ENCODE measurements at regions of chr17 and their contacts with region 1.

Region 1: DNA sequence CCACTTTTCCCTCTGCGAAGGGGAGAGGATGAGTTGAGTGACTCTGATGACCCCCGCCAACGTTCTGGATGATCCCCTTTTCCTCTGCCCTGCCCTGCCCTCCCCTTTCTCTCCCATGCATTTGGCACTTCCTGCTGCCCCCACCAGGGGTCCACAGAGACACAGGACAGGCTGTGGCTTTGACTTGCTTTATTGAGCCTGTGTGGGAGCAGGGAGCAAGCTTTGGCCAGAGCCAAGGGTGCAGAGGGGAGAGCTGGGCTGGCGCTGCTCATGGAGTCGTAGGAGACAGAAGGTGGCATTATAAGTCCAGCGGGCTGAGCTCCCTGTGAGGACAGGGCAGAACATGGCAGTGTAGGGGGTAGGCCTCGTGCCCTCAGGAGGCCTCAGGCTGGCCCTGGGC is 1.6 kb downstream of the PPY start:
- DNase-seq: peak; percentile 78 to 83
- H3K4me3 ChIP-seq: no peak overlapping the region
- H3K4me3 Mint-ChIP-seq: no peak overlapping the region
- H3K27ac Mint-ChIP-seq: no peak overlapping the region
- H3K4me1 ChIP-seq: peaks cover 15% of the 10 kb centered on the region
- H3K4me1 Mint-ChIP-seq: peaks cover 17% of the 10 kb centered on the region
- H3K27me3 ChIP-seq: no peaks in the 10 kb centered on the region
- H3K27me3 Mint-ChIP-seq: peaks cover 6% of the 10 kb centered on the region
- CTCF ChIP-seq: peak; percentile 87 to 88

Region 2: GRCh38 chr17:43676471-43676870 is 264.2 kb before region 1 on chr17:
- CTCF ChIA-PET with region 1: no interaction called
- POLR2A ChIA-PET with region 1: no interaction called
- intact Hi-C with region 1: no loop called
- DNase-seq: no peak
- H3K4me3 ChIP-seq: no peak overlapping the region
- H3K4me3 Mint-ChIP-seq: no peak overlapping the region
- H3K27ac Mint-ChIP-seq: peak overlapping the region; percentile 69
- H3K4me1 ChIP-seq: peaks cover 47% of the 10 kb centered on the region
- H3K4me1 Mint-ChIP-seq: peaks cover 52% of the 10 kb centered on the region
- H3K27me3 ChIP-seq: no peaks in the 10 kb centered on the region
- H3K27me3 Mint-ChIP-seq: no peaks in the 10 kb centered on the region
- CTCF ChIP-seq: no peak

Region 3: DNA sequence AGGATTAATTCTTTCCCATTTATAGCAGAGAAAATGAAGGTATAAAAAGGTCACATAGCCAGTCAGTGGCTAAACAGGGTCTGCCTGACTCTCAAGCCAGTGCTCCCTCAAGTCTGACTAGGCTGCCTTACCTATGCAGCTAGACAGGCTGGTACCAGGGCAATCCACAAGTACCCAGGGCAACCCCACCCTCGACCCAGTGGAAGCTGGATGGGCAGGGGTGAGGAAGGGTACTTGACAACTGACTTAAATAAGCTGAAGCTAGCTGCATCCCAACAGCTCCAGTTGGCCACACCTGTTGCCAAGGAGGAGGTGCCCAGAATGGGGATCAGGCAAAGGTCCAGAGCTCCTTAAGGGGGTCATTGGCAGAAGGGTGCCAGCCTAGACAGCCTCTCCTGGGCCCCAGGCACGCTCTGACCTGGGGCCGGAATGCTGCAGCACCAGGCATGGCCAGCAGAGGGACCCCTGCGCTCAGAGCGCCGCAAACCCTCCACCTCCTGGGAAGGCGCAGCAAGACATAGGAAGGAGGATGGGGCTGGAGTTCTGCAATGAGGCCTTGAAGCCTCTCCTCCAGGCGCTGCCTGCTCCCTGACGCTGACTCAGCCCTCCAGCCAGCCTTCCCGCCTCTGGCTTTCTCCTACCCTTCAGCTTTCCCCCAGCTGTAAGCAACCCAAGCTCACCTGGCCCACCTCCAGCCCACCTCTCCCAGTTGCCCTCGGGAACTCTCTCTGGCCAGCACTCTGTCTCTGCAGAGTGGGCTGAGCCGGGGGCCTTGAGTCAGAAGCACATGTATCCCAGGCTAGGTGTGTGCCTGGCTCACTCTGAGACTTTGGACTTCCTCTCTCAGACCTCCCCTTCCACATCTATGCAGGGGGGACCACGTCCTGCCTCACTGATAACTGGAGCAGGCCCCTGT is 62.1 kb before region 1 on chr17:
- CTCF ChIA-PET with region 1: interaction called, 11 read pairs
- POLR2A ChIA-PET with region 1: no interaction called
- intact Hi-C with region 1: loop called (anchors 5 kb)
- DNase-seq: peak; percentile 81 to 89
- H3K4me3 ChIP-seq: no peak overlapping the region
- H3K4me3 Mint-ChIP-seq: no peak overlapping the region
- H3K27ac Mint-ChIP-seq: peak overlapping the region; percentile 45
- H3K4me1 ChIP-seq: peaks cover 10% of the 10 kb centered on the region
- H3K4me1 Mint-ChIP-seq: peaks cover 8% of the 10 kb centered on the region
- H3K27me3 ChIP-seq: no peaks in the 10 kb centered on the region
- H3K27me3 Mint-ChIP-seq: no peaks in the 10 kb centered on the region
- CTCF ChIP-seq: peak; percentile 98 to 99

Region 4: DNA sequence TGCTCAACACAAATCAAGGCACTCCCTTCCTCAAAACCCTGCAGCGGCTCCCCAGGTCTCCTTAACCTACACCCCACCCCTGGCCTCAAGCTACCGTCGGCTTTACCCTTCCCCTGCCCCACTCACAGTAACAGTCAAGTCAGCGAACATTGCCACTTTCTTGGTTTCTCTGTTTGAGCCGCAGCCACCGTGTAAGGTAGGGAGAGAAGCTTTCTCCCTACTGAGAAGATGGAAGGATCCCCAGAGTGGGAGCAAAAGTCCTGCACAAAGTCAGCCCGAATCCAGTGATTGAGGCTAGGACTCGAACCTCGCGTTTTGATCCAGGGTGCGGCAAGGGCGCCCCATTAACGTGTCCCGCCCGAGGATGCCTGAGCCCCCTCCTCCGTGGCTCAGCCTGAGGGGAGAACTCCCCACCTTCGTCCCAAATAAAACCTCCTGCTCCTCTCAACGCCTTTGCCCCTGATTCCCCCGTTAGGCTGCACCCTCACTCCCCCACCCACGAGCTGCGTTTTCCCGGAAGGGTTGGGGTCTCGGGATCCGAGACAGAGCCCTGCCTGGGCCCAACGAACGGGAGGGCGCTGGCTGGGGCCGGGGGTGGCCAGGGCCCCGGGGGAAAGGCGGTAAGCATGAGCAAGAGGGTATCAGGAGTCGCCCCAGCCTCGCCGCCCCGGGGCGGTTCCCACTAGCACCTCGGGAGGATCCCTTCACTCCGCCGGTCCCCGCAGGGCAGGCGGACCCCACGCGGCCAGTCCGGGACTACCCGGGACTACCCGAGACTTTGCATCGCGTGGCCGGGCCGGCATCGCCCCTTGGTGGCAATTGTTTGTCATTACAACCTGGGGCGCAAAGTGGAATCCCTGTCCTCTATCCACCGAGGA is 53.9 kb after region 1 on chr17:
- CTCF ChIA-PET with region 1: interaction called, 29 read pairs
- POLR2A ChIA-PET with region 1: interaction called, 3 read pairs
- intact Hi-C with region 1: loop called (anchors 1 kb)
- DNase-seq: peak; percentile 73 to 85
- H3K4me3 ChIP-seq: peak overlapping the region; percentile 17; the same call in 1 of the 2 replicates
- H3K4me3 Mint-ChIP-seq: peak overlapping the region; percentile 61
- H3K27ac Mint-ChIP-seq: no peak overlapping the region
- H3K4me1 ChIP-seq: peaks cover 11% of the 10 kb centered on the region
- H3K4me1 Mint-ChIP-seq: no peaks in the 10 kb centered on the region
- H3K27me3 ChIP-seq: no peaks in the 10 kb centered on the region
- H3K27me3 Mint-ChIP-seq: peaks cover 3% of the 10 kb centered on the region
- CTCF ChIP-seq: peak; percentile 84 to 98

Region 5: DNA sequence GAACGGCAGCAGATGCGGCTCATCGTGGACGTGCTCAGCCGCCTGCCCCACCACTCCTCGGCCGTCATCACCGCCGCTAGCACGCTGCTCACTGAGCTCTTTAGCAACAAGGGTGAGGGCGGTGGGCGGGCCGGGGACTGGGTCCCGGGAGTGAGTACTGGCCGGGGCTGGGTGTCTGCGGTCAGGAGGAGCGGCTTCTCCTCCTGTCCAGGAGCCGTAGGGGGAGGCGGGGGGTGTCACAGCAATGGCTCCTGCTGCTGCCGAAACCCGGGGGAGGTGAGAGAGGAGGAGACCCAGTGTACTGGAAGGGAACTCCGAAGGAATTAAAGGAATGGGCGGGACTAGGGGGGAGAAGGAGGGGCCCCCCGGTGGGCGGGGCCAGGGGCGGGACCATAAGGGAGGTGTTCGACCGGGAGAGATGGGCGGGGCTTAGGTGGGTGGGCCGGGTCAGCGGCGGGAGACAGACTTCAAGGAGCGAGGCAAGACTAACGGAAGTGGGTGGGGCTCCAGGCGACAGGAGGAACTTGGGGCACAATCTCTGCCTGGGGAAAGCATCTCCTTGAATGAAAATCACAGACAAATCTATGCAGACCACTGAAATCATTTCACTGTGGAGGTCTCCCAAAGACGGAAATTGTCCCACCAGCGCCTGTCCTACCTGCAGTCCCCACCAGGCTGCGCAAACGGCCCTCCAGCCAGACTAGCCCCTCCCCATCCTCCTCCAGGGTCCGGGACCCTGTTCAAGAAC is 66.1 kb after region 1 on chr17:
- CTCF ChIA-PET with region 1: interaction called, 15 read pairs
- POLR2A ChIA-PET with region 1: interaction called, 3 read pairs
- intact Hi-C with region 1: no loop called
- DNase-seq: peak; percentile 95 to 99
- H3K4me3 ChIP-seq: peak overlapping the region; percentile 50
- H3K4me3 Mint-ChIP-seq: peak overlapping the region; percentile 69
- H3K27ac Mint-ChIP-seq: peak overlapping the region; percentile 5
- H3K4me1 ChIP-seq: peaks cover 18% of the 10 kb centered on the region
- H3K4me1 Mint-ChIP-seq: no peaks in the 10 kb centered on the region
- H3K27me3 ChIP-seq: peaks cover 3% of the 10 kb centered on the region
- H3K27me3 Mint-ChIP-seq: peaks cover 4% of the 10 kb centered on the region
- CTCF ChIP-seq: peak; percentile 33 to 53

Region 6: GRCh38 chr17:44044067-44044466 is 103.4 kb after region 1 on chr17:
- CTCF ChIA-PET with region 1: interaction called, 18 read pairs
- POLR2A ChIA-PET with region 1: no interaction called
- intact Hi-C with region 1: loop called (anchors 1 kb)
- DNase-seq: no peak
- H3K4me3 ChIP-seq: no peak overlapping the region
- H3K4me3 Mint-ChIP-seq: no peak overlapping the region
- H3K27ac Mint-ChIP-seq: no peak overlapping the region
- H3K4me1 ChIP-seq: no peaks in the 10 kb centered on the region
- H3K4me1 Mint-ChIP-seq: peaks cover 6% of the 10 kb centered on the region
- H3K27me3 ChIP-seq: no peaks in the 10 kb centered on the region
- H3K27me3 Mint-ChIP-seq: no peaks in the 10 kb centered on the region
- CTCF ChIP-seq: no peak

Region 7: DNA sequence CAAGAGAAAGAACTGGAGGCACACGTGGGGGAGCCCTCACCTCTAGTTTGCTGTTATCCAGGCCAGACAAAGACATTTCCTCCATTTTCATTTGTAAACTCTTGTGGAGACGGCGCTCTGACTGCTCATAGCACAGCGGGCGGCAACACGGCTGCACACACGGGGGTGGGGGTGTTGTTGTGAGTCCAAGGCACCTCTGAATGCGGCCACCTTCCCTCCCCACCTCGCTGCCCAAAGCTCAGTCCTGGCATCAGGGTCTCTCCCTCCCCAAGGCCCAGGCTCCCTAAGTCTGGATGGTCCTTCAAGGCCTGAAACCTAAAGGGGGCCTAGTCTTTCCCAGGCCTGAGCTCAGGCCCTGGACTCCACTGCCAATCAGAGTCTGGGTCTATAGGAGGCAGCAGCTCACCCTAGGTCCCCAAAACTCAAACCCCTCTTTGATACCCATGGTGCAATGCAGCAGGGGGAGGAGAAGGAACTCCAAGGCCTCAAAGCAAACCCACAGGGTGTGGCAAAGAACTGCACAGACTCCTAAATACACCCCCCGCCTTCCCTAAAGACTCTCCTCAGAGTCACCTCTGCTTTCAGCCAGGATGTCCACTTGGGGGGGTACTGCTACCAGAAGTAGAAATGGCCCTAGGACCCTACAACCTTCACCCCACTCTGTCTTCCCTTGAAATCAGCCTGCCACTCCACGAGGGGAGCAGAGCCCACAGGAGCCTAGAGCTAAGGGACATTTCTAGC is 257.5 kb after region 1 on chr17:
- CTCF ChIA-PET with region 1: no interaction called
- POLR2A ChIA-PET with region 1: no interaction called
- intact Hi-C with region 1: no loop called
- DNase-seq: peak in 1 of 2 experiments; percentile 44
- H3K4me3 ChIP-seq: peak overlapping the region; percentile 91
- H3K4me3 Mint-ChIP-seq: peak overlapping the region; percentile 70
- H3K27ac Mint-ChIP-seq: peak overlapping the region; percentile 60
- H3K4me1 ChIP-seq: peaks cover 19% of the 10 kb centered on the region
- H3K4me1 Mint-ChIP-seq: peaks cover 16% of the 10 kb centered on the region
- H3K27me3 ChIP-seq: no peaks in the 10 kb centered on the region
- H3K27me3 Mint-ChIP-seq: no peaks in the 10 kb centered on the region
- CTCF ChIP-seq: peak in 1 of 2 experiments; percentile 32